A673 (cell line): ENCODE measurements at regions of chr10 and their contacts with region 1.

Region 1: GRCh38 chr10:51397695-51398094 is 301.7 kb downstream of the CSTF2T start:
- DNase-seq: no peak
- H3K4me3 ChIP-seq: no peak overlapping the region
- H3K27ac ChIP-seq: no peak overlapping the region
- H3K4me1 ChIP-seq: no peaks in the 10 kb centered on the region
- H3K27me3 ChIP-seq: no peaks in the 10 kb centered on the region
- CTCF ChIP-seq: no peak

Region 2: GRCh38 chr10:51462076-51462779 is 64.5 kb after region 1 on chr10:
- CTCF ChIA-PET with region 1: no interaction called
- POLR2A ChIA-PET with region 1: no interaction called
- intact Hi-C with region 1: no loop called
- DNase-seq: no peak
- H3K4me3 ChIP-seq: no peak overlapping the region
- H3K27ac ChIP-seq: no peak overlapping the region
- H3K4me1 ChIP-seq: no peaks in the 10 kb centered on the region
- H3K27me3 ChIP-seq: no peaks in the 10 kb centered on the region
- CTCF ChIP-seq: no peak

Region 3: GRCh38 chr10:51934373-51934772 is 536.7 kb after region 1 on chr10:
- CTCF ChIA-PET with region 1: no interaction called
- POLR2A ChIA-PET with region 1: interaction called, 10 read pairs
- intact Hi-C with region 1: no loop called
- DNase-seq: no peak
- H3K4me3 ChIP-seq: no peak overlapping the region
- H3K27ac ChIP-seq: no peak overlapping the region
- H3K4me1 ChIP-seq: no peaks in the 10 kb centered on the region
- H3K27me3 ChIP-seq: peaks cover 7% of the 10 kb centered on the region
- CTCF ChIP-seq: no peak